IMR-90 (cell line): ENCODE measurements at regions of chr6 and their contacts with region 1.

Region 1: GRCh38 chr6:29942275-29943052 is at the start of gene HLA-A:
- DNase-seq: peak; percentile 95
- ATAC-seq: peak; percentile 99
- H3K4me3 ChIP-seq: peak within 1 kb of the TSS; percentile 72
- H3K27ac ChIP-seq: peak within 1 kb of the TSS; percentile 75
- H3K4me1 ChIP-seq: peaks cover 4% of the 10 kb centered on the region
- H3K27me3 ChIP-seq: no peaks in the 10 kb centered on the region
- CTCF ChIP-seq: no peak
- POLR2A ChIP-seq: peak; percentile 94
- RAD21 ChIP-seq: no peak
- total RNA-seq, gene HLA-A: 76.4 and 94.5 TPM in 2 replicates

Region 2: DNA sequence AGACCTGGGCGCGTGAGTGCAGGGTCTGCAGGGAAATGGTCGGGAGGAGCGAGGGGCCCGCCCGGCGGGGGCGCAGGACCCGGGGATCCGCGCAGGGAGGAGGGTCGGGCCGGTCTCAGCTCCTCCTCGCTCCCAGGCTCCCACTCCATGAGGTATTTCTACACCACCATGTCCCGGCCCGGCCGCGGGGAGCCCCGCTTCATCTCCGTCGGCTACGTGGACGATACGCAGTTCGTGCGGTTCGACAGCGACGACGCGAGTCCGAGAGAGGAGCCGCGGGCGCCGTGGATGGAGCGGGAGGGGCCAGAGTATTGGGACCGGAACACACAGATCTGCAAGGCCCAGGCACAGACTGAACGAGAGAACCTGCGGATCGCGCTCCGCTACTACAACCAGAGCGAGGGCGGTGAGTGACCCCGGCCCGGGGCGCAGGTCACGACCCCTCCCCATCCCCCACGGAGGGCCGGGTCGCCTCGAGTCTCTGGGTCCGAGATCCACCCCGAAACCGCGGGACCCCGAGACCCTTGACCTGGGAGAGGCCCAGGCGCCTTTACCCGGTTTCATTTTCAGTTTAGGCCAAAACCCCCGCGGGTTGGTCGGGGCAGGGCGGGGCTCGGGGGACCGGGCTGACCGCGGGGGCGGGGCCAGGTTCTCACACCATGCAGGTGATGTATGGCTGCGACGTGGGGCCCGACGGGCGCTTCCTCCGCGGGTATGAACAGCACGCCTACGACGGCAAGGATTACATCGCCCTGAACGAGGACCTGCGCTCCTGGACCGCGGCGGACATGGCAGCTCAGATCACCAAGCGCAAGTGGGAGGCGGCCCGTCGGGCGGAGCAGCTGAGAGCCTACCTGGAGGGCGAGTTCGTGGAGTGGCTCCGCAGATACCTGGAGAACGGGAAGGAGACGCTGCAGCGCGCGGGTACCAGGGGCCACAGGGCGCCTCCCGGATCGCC is 54.4 kb before region 1 on chr6:
- CTCF ChIA-PET with region 1: no interaction called
- POLR2A ChIA-PET with region 1: no interaction called
- dilution Hi-C with region 1: no loop called
- in situ Hi-C with region 1: no loop called
- intact Hi-C with region 1: loop called (anchors 1 kb)
- DNase-seq: peak; percentile 11
- ATAC-seq: peak; percentile 83
- H3K4me3 ChIP-seq: peak overlapping the region; percentile 91
- H3K27ac ChIP-seq: peak overlapping the region; percentile 60
- H3K4me1 ChIP-seq: no peaks in the 10 kb centered on the region
- H3K27me3 ChIP-seq: peaks cover 5% of the 10 kb centered on the region
- CTCF ChIP-seq: no peak
- POLR2A ChIP-seq: no peak
- RAD21 ChIP-seq: no peak

Region 3: DNA sequence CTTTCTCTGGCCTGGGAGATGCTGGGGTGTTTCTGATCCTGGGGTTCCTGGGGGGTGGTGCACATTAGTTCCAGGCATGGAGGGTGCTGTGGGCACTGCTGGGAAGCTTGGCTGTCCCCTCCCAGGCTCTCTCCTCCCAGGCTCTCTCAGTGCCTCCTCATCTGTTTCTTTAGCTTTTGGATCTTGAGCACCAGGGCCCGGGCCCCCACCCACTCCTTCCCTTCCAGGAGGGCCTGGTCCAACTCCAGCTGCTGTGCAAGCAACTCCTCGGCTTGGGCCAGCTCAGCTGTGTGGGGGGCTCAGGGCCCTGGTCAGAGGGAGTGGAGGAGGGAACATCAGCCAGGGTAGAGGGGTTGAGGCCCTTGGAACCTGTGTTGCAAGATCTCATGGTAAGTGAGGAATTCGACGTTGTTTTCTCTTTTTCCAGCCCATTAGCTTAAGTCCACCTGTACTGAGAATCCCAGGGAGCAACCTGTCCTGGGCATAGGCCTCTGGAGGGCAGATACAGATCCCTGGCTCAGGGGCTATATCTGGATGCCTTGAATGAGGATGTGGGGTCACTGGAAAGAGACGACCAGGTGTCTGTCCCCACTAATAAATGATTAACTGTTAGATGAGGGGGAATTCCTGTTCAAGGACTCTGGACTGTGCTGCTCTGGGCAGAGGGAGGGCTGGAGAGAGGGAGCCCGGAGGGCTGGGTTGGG is 34.7 kb before region 1 on chr6:
- CTCF ChIA-PET with region 1: no interaction called
- POLR2A ChIA-PET with region 1: no interaction called
- dilution Hi-C with region 1: no loop called
- in situ Hi-C with region 1: no loop called
- intact Hi-C with region 1: no loop called
- DNase-seq: no peak
- ATAC-seq: no peak
- H3K4me3 ChIP-seq: no peak overlapping the region
- H3K27ac ChIP-seq: no peak overlapping the region
- H3K4me1 ChIP-seq: no peaks in the 10 kb centered on the region
- H3K27me3 ChIP-seq: peaks cover 17% of the 10 kb centered on the region
- CTCF ChIP-seq: no peak
- POLR2A ChIP-seq: no peak
- RAD21 ChIP-seq: no peak

Region 4: GRCh38 chr6:29964887-29965562 is 22.6 kb after region 1 on chr6:
- CTCF ChIA-PET with region 1: no interaction called
- POLR2A ChIA-PET with region 1: no interaction called
- dilution Hi-C with region 1: no loop called
- in situ Hi-C with region 1: no loop called
- intact Hi-C with region 1: loop called (anchors 1 kb)
- DNase-seq: peak; percentile 91
- ATAC-seq: peak; percentile 89
- H3K4me3 ChIP-seq: peak overlapping the region; percentile 41
- H3K27ac ChIP-seq: peak overlapping the region; percentile 97
- H3K4me1 ChIP-seq: peaks cover 6% of the 10 kb centered on the region; the same call in 1 of the 2 replicates
- H3K27me3 ChIP-seq: no peaks in the 10 kb centered on the region
- CTCF ChIP-seq: no peak
- POLR2A ChIP-seq: no peak
- RAD21 ChIP-seq: no peak